Activated CD4-positive, alpha-beta T cell treated with anti-CD3 and anti-CD28 coated beads, Interleukin-2, amount 10 ng/mL, durations not matched to agents 24 days and 14 days (primary cell): ENCODE measurements at regions of chr11 and their contacts with region 1.

Region 1: GRCh38 chr11:95556342-95557163 is 233.0 kb downstream of the FAM76B start:
- DNase-seq: peak; percentile 70
- H3K4me3 Mint-ChIP-seq: peak overlapping the region; percentile 66
- H3K27ac Mint-ChIP-seq: peak overlapping the region; percentile 87
- H3K4me1 Mint-ChIP-seq: peaks cover 42% of the 10 kb centered on the region
- H3K27me3 Mint-ChIP-seq: no peaks in the 10 kb centered on the region

Region 2: DNA sequence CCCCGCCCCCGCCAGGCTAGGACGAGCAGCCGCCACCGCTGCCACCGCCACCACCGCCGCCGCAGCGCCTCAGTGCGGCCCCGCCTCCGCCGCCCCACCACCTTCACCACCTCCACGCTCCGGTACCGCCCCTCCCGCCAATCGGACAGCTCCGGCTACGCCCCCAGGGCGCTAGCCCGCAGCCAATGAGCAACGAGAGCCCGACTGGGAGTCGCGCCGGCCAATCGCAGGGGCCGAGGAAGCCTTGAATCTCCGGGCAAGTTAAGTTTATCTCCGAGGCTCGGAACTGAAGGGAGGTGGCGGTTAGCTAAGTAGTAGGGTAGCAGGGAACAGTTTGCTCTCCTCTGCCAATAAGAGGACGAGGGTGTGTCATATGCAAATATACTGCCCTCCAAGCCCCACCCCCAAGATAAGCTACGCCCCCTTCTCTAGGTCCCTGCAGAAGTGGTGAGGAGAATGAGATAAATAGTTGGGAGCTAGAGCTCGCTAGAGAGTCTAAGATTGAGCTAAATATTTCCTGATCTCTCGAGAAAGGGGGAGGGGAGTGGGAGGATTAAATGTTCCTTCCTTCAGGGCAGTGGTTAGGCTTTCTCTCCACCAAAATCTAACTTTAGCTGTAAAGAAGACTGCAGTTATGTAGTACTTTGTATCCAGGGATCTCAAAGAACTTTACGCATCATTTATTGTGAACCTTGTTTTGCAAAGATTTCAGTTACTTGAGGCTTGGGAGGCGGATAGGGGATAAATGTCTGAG is 325.2 kb before region 1 on chr11 and contains the start of gene SESN3:
- intact Hi-C with region 1: loop called (anchors 1 kb)
- DNase-seq: peak; percentile 100
- H3K4me3 Mint-ChIP-seq: no peak within 1 kb of the TSS
- H3K27ac Mint-ChIP-seq: peak within 1 kb of the TSS; percentile 92
- H3K4me1 Mint-ChIP-seq: peaks cover 28% of the 10 kb centered on the region
- H3K27me3 Mint-ChIP-seq: no peaks in the 10 kb centered on the region
- total RNA-seq, gene SESN3: 63.4 and 64.2 TPM in 2 replicates

Region 3: DNA sequence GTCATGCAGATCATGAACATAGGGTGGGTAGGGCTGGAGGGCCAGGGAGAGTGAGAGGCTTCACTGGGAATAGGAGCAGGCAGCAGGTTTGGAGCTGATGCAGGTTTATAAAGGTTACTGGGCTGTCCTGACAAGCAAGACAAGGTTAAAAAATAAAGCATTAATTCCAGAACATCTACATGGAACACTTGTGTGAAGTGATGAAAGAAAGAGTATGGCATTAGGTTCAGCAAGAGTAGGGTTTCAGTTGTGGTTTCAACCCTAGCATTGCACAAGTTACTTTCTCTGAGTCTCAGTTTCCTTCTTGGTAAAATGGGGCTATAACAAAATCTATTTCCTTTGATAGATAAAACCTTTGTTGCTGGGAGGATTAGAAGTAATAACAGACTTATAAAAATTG is 210.9 kb before region 1 on chr11:
- intact Hi-C with region 1: loop called (anchors 5 kb)
- DNase-seq: peak; percentile 57
- H3K4me3 Mint-ChIP-seq: peak overlapping the region; percentile 48
- H3K27ac Mint-ChIP-seq: peak overlapping the region; percentile 50
- H3K4me1 Mint-ChIP-seq: peaks cover 30% of the 10 kb centered on the region
- H3K27me3 Mint-ChIP-seq: peaks cover 9% of the 10 kb centered on the region

Region 4: GRCh38 chr11:95577716-95578460 is 21.3 kb after region 1 on chr11:
- intact Hi-C with region 1: no loop called
- DNase-seq: no peak
- H3K4me3 Mint-ChIP-seq: no peak overlapping the region
- H3K27ac Mint-ChIP-seq: no peak overlapping the region
- H3K4me1 Mint-ChIP-seq: peaks cover 13% of the 10 kb centered on the region
- H3K27me3 Mint-ChIP-seq: no peaks in the 10 kb centered on the region

Region 5: DNA sequence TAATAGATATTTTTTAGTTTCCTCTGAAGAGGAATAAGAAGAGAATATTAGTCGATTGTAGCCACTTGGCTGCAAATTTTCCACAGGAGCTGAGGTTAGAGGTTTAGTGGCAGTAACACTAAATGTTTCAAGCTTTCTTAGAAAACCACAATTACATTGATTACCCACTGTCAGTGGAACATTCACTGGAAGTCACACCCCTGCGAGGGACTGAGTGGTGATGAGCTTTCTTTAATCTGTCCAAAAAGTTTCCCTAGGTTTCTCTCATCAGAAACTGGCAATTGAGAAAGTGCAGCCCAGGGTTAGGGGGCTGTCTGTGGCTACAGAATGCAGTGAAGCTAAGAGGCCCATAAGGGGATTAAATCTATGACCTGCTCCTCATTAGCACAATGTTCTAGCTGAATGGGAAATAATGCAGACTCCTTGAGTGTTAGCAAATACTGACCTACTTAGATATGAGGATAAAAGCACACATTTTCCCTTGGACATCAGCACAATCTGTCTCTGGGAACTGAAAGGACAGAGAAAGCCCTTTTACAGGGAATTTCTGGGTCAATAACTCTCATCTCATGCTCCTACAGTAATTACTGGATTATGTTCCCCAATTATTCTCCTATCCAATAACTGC is 43.5 kb after region 1 on chr11:
- intact Hi-C with region 1: loop called (anchors 1 kb)
- DNase-seq: peak; percentile 66
- H3K4me3 Mint-ChIP-seq: no peak overlapping the region
- H3K27ac Mint-ChIP-seq: peak overlapping the region; percentile 35
- H3K4me1 Mint-ChIP-seq: peaks cover 19% of the 10 kb centered on the region
- H3K27me3 Mint-ChIP-seq: no peaks in the 10 kb centered on the region

Region 6: DNA sequence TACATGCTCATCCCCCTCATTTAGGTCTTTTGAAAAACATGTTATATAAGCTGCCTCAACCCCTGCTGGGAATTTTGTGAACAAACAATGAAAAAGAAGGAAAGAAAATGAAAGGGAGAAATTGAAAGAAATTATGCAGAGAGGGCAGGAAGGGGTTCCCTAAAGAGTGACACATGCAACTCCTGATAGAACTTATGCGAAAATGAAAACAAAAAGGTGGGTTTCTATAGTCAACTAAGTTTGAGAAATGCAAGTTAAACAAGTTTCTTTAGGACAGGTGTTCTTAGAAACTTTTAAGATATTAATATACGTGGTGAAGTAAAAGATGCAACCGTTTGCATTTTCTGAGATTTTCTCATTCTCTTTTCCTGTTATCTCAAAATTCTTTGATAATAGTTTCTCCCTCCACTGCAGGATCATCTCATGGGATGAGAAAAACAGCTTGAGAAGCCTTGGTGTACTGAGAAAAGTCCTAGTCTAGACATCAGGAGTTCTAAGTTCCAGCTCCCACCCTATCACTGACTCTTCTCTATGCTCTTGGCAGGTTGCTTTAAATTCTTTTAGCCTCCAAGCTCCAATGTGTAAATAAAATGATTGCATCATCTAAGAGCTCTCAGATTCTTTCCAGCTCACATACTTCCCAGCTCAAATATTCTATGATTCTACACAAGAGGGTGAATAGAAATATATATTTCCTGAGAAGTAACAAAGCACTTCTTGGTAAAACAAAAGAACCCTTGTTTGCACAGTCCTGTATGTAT is 123.8 kb after region 1 on chr11:
- intact Hi-C with region 1: loop called (anchors 1 kb)
- DNase-seq: no peak
- H3K4me3 Mint-ChIP-seq: peak overlapping the region; percentile 55
- H3K27ac Mint-ChIP-seq: peak overlapping the region; percentile 76
- H3K4me1 Mint-ChIP-seq: peaks cover 82% of the 10 kb centered on the region
- H3K27me3 Mint-ChIP-seq: no peaks in the 10 kb centered on the region

Region 7: GRCh38 chr11:95699631-95700470 is 143.3 kb after region 1 on chr11:
- intact Hi-C with region 1: loop called (anchors 1 kb)
- DNase-seq: no peak
- H3K4me3 Mint-ChIP-seq: peak overlapping the region; percentile 79
- H3K27ac Mint-ChIP-seq: peak overlapping the region; percentile 98
- H3K4me1 Mint-ChIP-seq: peaks cover 55% of the 10 kb centered on the region
- H3K27me3 Mint-ChIP-seq: no peaks in the 10 kb centered on the region